ENCODE measurements at regions of chr5 and their contacts with region 1.

Region 1: DNA sequence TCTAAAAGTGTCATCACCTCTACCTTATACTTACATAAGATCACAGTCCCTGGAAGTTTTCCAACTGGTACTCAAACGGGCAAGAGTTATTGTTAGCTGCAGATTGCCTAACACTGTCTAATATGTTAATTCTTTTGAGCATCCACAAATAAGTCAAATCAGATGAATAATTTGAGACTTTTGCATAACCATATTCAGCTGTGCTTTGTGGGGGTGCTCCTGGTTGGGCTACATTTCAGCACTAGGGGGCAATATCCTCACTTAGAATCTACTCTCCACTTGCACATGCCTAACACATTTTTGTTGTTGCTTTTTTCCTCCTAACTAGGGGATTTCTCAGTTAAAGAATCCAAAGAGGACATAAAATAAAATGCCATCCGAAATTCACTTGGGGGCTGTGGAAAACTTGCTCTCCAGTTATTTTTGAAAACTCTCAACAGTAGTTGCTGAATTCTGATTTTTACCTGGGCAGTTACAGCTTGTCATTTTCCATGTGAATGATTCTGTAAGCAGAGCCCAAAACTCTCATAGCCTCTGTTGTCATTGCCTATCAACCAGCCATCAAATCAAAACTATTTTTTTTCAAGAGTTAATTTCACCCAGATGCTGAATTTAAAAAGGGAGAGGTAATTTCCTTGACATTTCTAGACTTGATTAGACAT is 71.5 kb downstream of the TRIM36 start:
- DNase-seq: peak; percentile 26 to 56 (median 38)
- ATAC-seq: peak; percentile 95
- H3K4me3 ChIP-seq: no peak overlapping the region
- H3K27ac ChIP-seq: no peak overlapping the region
- H3K4me1 ChIP-seq: no peaks in the 10 kb centered on the region
- H3K27me3 ChIP-seq: no peaks in the 10 kb centered on the region; a peak in 1 of 5 replicates
- CTCF ChIP-seq: peak; percentile 62 to 73 (median 68)
- EP300 ChIP-seq: no peak
- POLR2A ChIP-seq: no peak
- RAD21 ChIP-seq: peak; percentile 60 to 78

Region 2: DNA sequence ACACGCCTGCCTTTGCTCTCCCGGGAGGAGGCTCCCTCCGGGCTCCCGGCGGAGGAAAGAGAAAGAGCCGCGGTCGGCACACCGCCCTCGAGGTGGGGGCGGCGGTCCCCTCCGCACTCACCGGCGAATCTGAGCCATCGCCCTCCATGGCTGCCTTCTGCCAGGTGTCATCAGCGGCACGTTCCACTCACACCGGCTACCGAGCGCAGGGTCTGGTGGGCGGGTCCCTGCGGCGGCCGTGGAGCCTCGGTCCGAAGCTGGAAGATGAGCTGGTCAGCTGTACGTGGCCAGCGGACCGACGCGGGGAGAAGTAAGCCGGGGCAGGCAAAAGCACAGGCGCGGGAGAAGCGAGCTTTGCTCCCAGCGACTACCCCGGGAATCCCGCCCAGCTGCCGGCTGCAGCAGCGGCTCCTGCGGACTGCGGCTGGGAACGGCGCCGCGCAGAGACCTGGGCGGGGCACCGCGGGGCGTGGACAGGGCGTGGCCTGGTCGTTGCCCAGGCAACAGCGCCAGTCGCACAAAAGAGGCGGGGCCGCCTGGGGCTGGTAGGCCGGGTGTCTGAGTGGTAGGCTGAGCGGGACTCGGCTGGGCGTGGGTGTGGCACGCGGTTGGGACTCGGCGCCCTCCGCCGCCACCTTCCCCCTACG is 71.4 kb after region 1 on chr5 and contains the start of gene TRIM36:
- CTCF ChIA-PET with region 1: no interaction called
- POLR2A ChIA-PET with region 1: no interaction called
- in situ Hi-C with region 1: no loop called
- intact Hi-C with region 1: loop called (anchors 5 kb)
- DNase-seq: peak; percentile 90 to 96 (median 93)
- ATAC-seq: peak; percentile 99
- H3K4me3 ChIP-seq: peak within 1 kb of the TSS; percentile 61
- H3K27ac ChIP-seq: no peak within 1 kb of the TSS
- H3K4me1 ChIP-seq: peaks cover 0 to 20% of the 10 kb centered on the region in 2 experiments; a peak in 2 of 5 replicates
- H3K27me3 ChIP-seq: peaks cover 0 to 14% of the 10 kb centered on the region in 2 experiments; a peak in 3 of 5 replicates
- CTCF ChIP-seq: peak; percentile 32 to 47 (median 44); a peak in 3 of 6 replicates
- EP300 ChIP-seq: no peak
- POLR2A ChIP-seq: no peak
- RAD21 ChIP-seq: peak in 1 of 2 experiments; percentile 8; a peak in 1 of 4 replicates
- polyA plus RNA-seq, gene TRIM36: 0.10 to 0.11 TPM

Region 3: GRCh38 chr5:115246361-115246991 is 148.3 kb after region 1 on chr5:
- CTCF ChIA-PET with region 1: interaction called, 15 read pairs
- POLR2A ChIA-PET with region 1: no interaction called
- in situ Hi-C with region 1: no loop called
- intact Hi-C with region 1: loop called (anchors 1 kb)
- DNase-seq: peak; percentile 20 to 44 (median 23)
- ATAC-seq: peak; percentile 81
- H3K4me3 ChIP-seq: no peak overlapping the region
- H3K27ac ChIP-seq: no peak overlapping the region
- H3K4me1 ChIP-seq: no peaks in the 10 kb centered on the region
- H3K27me3 ChIP-seq: no peaks in the 10 kb centered on the region
- CTCF ChIP-seq: peak; percentile 27 to 73 (median 51); a peak in 4 of 6 replicates
- EP300 ChIP-seq: no peak
- POLR2A ChIP-seq: no peak
- RAD21 ChIP-seq: peak; percentile 59 to 69

Region 4: GRCh38 chr5:115309751-115310370 is 211.7 kb after region 1 on chr5:
- CTCF ChIA-PET with region 1: no interaction called
- POLR2A ChIA-PET with region 1: no interaction called
- in situ Hi-C with region 1: no loop called
- intact Hi-C with region 1: loop called (anchors 5 kb)
- DNase-seq: peak in 3 of 4 experiments; percentile 12 to 49 (median 15)
- ATAC-seq: peak; percentile 70
- H3K4me3 ChIP-seq: no peak overlapping the region
- H3K27ac ChIP-seq: no peak overlapping the region
- H3K4me1 ChIP-seq: no peaks in the 10 kb centered on the region
- H3K27me3 ChIP-seq: no peaks in the 10 kb centered on the region
- CTCF ChIP-seq: peak in 1 of 3 experiments; percentile 70; a peak in 3 of 6 replicates
- EP300 ChIP-seq: no peak
- POLR2A ChIP-seq: no peak
- RAD21 ChIP-seq: peak; percentile 87 to 91

Region 5: GRCh38 chr5:115586601-115587048 is 488.5 kb after region 1 on chr5:
- CTCF ChIA-PET with region 1: no interaction called
- POLR2A ChIA-PET with region 1: no interaction called
- in situ Hi-C with region 1: no loop called
- intact Hi-C with region 1: loop called (anchors 5 kb)
- DNase-seq: peak; percentile 14 to 25 (median 16)
- ATAC-seq: peak; percentile 53; the same call in 1 of the 3 replicates
- H3K4me3 ChIP-seq: no peak overlapping the region
- H3K27ac ChIP-seq: no peak overlapping the region
- H3K4me1 ChIP-seq: no peaks in the 10 kb centered on the region
- H3K27me3 ChIP-seq: no peaks in the 10 kb centered on the region
- CTCF ChIP-seq: peak in 2 of 3 experiments; percentile 43 to 60; a peak in 4 of 6 replicates
- EP300 ChIP-seq: no peak
- POLR2A ChIP-seq: no peak
- RAD21 ChIP-seq: peak; percentile 70 to 72